ENCODE measurements at regions of chr17 and their contacts with region 1.

Region 1: DNA sequence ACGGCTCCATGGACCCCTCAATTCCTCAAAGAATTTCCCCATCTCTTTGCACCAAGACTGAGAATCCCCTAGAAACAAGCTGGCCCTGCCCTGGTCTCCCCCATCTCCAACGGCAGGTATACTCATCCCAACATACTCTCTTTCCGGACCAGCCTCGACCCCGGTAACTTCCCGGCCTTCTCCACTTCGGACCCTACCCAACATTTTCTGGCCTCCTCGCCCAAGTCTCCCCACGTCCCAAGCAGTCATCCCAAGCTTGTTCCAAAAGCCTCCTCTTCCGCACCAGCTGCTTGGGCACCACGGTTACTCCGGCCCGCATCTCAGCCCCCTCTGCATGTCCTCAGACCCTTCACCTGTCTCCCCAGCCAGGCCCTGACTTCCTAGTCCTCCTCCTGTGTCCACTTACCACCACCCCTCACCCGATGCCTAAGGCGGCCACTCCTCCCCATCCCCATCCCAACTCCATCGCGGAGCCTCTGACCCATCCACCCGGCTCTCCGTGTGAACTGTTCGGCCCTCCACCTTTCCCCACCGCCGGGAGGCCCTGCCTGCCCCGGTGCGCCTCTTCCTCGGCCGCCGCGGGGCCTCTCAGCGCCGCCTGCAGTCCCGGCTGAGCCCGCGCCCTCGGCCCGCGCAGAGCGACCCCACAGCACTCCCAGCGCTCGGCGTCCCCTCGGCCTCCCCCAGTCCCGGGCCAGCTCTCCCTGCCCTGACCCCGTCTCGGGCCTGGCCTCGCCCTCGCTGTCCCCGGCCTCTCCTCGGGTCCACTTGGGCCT is 1.0 kb downstream of the PITPNA start:
- DNase-seq: peak; percentile 64
- ATAC-seq: peak; percentile 35
- H3K4me3 Mint-ChIP-seq: peak overlapping the region; percentile 81
- H3K27ac Mint-ChIP-seq: no peak overlapping the region
- H3K4me1 Mint-ChIP-seq: peaks cover 27% of the 10 kb centered on the region
- H3K27me3 Mint-ChIP-seq: no peaks in the 10 kb centered on the region

Region 2: GRCh38 chr17:1438593-1439083 is 123.0 kb before region 1 on chr17:
- CTCF ChIA-PET with region 1: no interaction called
- POLR2A ChIA-PET with region 1: no interaction called
- intact Hi-C with region 1: no loop called
- DNase-seq: no peak
- ATAC-seq: no peak
- H3K4me3 Mint-ChIP-seq: no peak overlapping the region
- H3K27ac Mint-ChIP-seq: no peak overlapping the region
- H3K4me1 Mint-ChIP-seq: peaks cover 14% of the 10 kb centered on the region
- H3K27me3 Mint-ChIP-seq: no peaks in the 10 kb centered on the region

Region 3: GRCh38 chr17:1643293-1643998 is 81.9 kb after region 1 on chr17:
- CTCF ChIA-PET with region 1: interaction called, 3 read pairs
- POLR2A ChIA-PET with region 1: no interaction called
- intact Hi-C with region 1: loop called in 1 of 2 experiments (anchors 1 kb)
- DNase-seq: peak; percentile 78
- ATAC-seq: peak; percentile 20
- H3K4me3 Mint-ChIP-seq: no peak overlapping the region
- H3K27ac Mint-ChIP-seq: no peak overlapping the region
- H3K4me1 Mint-ChIP-seq: peaks cover 19% of the 10 kb centered on the region
- H3K27me3 Mint-ChIP-seq: no peaks in the 10 kb centered on the region

Region 4: GRCh38 chr17:2070241-2071023 is 508.8 kb after region 1 on chr17:
- CTCF ChIA-PET with region 1: no interaction called
- POLR2A ChIA-PET with region 1: no interaction called
- intact Hi-C with region 1: no loop called
- DNase-seq: peak; percentile 91
- ATAC-seq: peak; percentile 88
- H3K4me3 Mint-ChIP-seq: peak overlapping the region; percentile 36
- H3K27ac Mint-ChIP-seq: peak overlapping the region; percentile 82
- H3K4me1 Mint-ChIP-seq: peaks cover 36% of the 10 kb centered on the region
- H3K27me3 Mint-ChIP-seq: peaks cover 3% of the 10 kb centered on the region